ENCODE measurements at regions of chr3 and their contacts with region 1.

Region 1: DNA sequence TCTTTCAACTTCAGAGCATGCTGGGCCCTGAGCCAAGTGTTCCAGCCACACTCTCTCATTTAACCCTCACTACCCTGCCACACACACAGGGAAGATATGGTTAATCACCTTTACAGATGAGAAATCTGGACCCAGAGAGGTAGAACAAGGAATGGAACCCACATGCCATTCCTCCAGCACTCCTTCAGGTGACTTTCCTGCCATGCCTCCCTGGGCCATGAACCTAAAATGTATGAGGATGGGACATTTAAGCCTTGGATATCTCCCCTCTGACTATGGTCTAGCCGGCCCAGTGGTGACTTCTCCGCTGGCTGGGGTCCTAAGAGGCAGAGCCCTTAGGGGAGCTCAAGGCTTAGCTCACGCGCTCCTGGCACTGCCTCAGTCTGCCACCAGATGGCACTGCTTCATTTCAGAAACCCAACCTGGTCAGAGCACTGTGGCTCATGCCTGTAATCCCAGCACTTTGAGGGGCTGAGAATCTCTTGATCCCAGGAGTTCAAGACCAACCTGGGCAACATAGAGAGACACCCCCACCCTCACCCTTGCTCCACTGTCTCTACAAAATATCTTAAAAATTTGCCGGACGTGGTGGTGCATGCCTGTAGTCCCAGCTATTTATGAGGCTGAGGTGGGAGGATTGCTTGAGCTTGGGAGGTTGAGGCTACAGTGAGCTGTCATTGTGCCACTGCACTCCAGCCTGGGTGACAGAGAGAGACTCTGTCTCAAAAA is 2.2 kb upstream of the DCAF1 start:
- DNase-seq: peak; percentile 65 to 85
- ATAC-seq: no peak

Region 2: GRCh38 chr3:51063053-51063452 is 438.9 kb before region 1 on chr3:
- intact Hi-C with region 1: no loop called
- DNase-seq: no peak
- ATAC-seq: no peak

Region 3: DNA sequence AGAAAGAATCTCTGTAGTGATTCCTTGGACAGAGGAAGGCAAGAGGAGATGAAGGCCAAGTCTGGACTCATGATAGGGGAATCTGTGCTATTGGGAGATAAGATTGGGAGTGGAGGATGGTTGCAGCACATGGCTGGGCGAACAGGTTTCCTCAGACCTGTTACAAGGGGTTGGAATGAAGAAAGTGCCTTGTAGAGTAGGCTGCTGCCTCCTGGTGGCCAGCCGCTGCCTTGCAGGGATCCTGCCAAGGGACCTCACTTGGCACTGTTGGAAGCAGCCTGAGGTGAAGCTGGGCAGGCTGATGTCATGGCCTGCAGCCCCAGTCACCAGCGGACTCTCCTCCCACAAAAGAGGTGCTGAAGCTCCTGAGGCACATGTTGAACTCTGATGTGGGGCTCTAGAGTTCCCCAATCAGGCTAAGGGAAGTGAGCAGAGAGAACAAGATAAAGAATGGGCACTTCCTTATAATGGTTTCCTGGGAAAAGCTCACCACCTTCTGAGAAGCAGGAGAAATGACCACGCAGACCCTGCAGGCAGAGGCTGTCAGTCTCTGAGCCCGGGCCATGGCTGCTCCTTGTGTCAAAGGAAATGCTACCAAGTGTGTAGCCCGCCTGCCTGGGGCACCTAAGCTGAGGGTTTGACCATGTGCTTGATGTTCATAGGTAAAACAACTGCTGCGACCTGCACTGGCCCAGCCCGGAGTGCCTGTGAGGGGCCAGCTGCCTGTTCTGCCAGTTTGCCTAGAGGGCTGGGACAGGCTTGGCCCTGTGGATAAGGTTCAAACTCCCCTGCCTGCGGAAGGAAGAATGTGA is 167.4 kb after region 1 on chr3:
- intact Hi-C with region 1: loop called in 1 of 2 experiments (anchors 5 kb)
- DNase-seq: peak; percentile 83 to 93
- ATAC-seq: peak; percentile 48

Region 4: DNA sequence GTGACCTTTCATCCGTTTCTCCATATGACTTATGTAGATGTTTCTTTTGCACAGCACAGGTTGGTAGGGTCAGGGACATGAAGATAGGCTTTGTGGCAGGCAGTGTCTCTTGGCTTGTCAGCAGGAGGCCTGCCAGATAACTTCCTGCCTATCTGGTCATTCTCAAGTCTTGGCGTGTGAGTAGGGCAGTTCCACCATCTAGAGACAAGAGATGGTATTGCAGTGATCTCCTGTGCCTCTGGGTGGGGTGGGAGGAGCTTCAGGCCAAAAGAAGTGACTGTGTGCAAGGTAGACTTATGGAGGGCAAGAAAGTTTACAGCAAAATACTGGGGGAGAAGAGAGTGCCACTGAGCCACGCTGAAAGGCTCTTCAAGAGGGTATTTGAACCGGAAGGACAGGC is 180.1 kb after region 1 on chr3:
- intact Hi-C with region 1: loop called in 1 of 2 experiments (anchors 10 kb)
- DNase-seq: peak; percentile 60 to 77
- ATAC-seq: peak; percentile 94

Region 5: GRCh38 chr3:51799879-51800749 is 298.1 kb after region 1 on chr3:
- intact Hi-C with region 1: loop called in 1 of 2 experiments (anchors 10 kb)
- DNase-seq: no peak
- ATAC-seq: peak; percentile 50

Measured in left colon (tissue), 2 donors.